Activated naive CD4-positive, alpha-beta T cell treated with anti-CD3 and anti-CD28 coated beads for 36 hours (primary cell): ENCODE measurements at regions of chr13 and their contacts with region 1.

Region 1: GRCh38 chr13:79480954-79481684 is at the start of gene NDFIP2:
- DNase-seq: peak; percentile 86
- H3K4me3 Mint-ChIP-seq: peak within 1 kb of the TSS; percentile 86
- H3K27ac Mint-ChIP-seq: peak within 1 kb of the TSS; percentile 97
- H3K4me1 Mint-ChIP-seq: peaks cover 49% of the 10 kb centered on the region
- H3K27me3 Mint-ChIP-seq: no peaks in the 10 kb centered on the region
- total RNA-seq, gene NDFIP2: 89.5 to 90.8 TPM

Region 2: GRCh38 chr13:78658635-78659449 is 822.3 kb before region 1 on chr13 and contains the start of gene OBI1:
- CTCF ChIA-PET with region 1: no interaction called
- intact Hi-C with region 1: loop called (anchors 10 kb)
- DNase-seq: peak; percentile 90
- H3K4me3 Mint-ChIP-seq: peak within 1 kb of the TSS; percentile 100
- H3K27ac Mint-ChIP-seq: peak within 1 kb of the TSS; percentile 96
- H3K4me1 Mint-ChIP-seq: peaks cover 35% of the 10 kb centered on the region
- H3K27me3 Mint-ChIP-seq: no peaks in the 10 kb centered on the region
- total RNA-seq, gene OBI1: 16.0 to 17.7 TPM

Region 3: GRCh38 chr13:79320433-79320832 is 160.7 kb before region 1 on chr13:
- CTCF ChIA-PET with region 1: no interaction called
- intact Hi-C with region 1: loop called (anchors 5 kb)
- DNase-seq: no peak
- H3K4me3 Mint-ChIP-seq: no peak overlapping the region
- H3K27ac Mint-ChIP-seq: no peak overlapping the region
- H3K4me1 Mint-ChIP-seq: peaks cover 15% of the 10 kb centered on the region
- H3K27me3 Mint-ChIP-seq: no peaks in the 10 kb centered on the region

Region 4: DNA sequence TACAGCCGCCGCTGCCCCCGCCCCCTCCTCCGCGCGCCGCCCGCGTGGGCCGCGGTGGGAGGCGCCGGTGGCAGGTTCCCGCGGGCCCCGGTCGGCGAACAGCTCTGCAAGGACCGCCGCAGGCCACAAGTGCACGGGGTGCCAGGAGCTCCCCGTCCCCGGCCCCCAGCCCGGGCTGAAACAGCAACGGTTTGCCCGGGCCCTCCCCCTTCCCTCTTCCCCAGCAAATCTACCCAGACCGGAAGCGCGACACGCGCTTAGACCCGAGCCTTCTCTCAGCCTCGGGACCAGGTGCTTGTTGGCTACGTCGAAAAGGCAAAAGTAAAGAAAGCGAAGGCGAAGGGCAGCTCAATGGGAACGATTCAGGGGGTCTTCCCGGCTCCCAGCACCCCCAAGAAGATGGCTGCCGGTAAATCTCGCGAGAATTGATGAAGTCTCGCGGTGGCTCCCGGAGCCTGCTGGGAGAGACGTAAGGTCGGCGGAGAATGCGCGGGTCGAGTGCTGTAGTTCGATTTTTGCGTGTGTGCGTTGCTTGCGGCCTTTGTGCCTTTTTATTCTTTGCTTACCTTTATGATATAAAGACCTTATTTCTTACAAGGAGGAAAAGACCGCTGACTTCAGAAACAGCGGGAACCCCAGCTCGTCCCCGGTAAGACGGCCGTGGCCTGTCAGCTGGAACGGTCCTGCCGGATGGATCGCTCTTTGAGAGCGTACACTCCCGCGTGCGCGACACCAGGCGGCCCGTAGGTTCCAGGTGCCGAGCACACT is 75.1 kb before region 1 on chr13 and contains the start of gene RBM26:
- CTCF ChIA-PET with region 1: interaction called, 8 read pairs
- intact Hi-C with region 1: loop called (anchors 1 kb)
- DNase-seq: peak; percentile 96
- H3K4me3 Mint-ChIP-seq: peak within 1 kb of the TSS; percentile 91
- H3K27ac Mint-ChIP-seq: peak within 1 kb of the TSS; percentile 97
- H3K4me1 Mint-ChIP-seq: peaks cover 41% of the 10 kb centered on the region
- H3K27me3 Mint-ChIP-seq: no peaks in the 10 kb centered on the region
- total RNA-seq, gene RBM26: 44.4 to 44.7 TPM

Region 5: GRCh38 chr13:79451500-79451962 is 29.6 kb before region 1 on chr13:
- CTCF ChIA-PET with region 1: interaction called, 13 read pairs
- intact Hi-C with region 1: loop called (anchors 1 kb)
- DNase-seq: peak; percentile 97
- H3K4me3 Mint-ChIP-seq: peak overlapping the region; percentile 68
- H3K27ac Mint-ChIP-seq: peak overlapping the region; percentile 93
- H3K4me1 Mint-ChIP-seq: peaks cover 62% of the 10 kb centered on the region
- H3K27me3 Mint-ChIP-seq: no peaks in the 10 kb centered on the region

Region 6: GRCh38 chr13:79491715-79492114 is 10.6 kb after region 1 on chr13:
- CTCF ChIA-PET with region 1: interaction called, 9 read pairs
- intact Hi-C with region 1: loop called (anchors 1 kb)
- DNase-seq: no peak
- H3K4me3 Mint-ChIP-seq: peak overlapping the region; percentile 72
- H3K27ac Mint-ChIP-seq: peak overlapping the region; percentile 92
- H3K4me1 Mint-ChIP-seq: peaks cover 91% of the 10 kb centered on the region
- H3K27me3 Mint-ChIP-seq: no peaks in the 10 kb centered on the region

Region 7: GRCh38 chr13:79541426-79542049 is 60.4 kb after region 1 on chr13:
- CTCF ChIA-PET with region 1: interaction called, 11 read pairs
- intact Hi-C with region 1: loop called (anchors 1 kb)
- DNase-seq: no peak
- H3K4me3 Mint-ChIP-seq: no peak overlapping the region
- H3K27ac Mint-ChIP-seq: no peak overlapping the region
- H3K4me1 Mint-ChIP-seq: peaks cover 5% of the 10 kb centered on the region
- H3K27me3 Mint-ChIP-seq: no peaks in the 10 kb centered on the region

Region 8: DNA sequence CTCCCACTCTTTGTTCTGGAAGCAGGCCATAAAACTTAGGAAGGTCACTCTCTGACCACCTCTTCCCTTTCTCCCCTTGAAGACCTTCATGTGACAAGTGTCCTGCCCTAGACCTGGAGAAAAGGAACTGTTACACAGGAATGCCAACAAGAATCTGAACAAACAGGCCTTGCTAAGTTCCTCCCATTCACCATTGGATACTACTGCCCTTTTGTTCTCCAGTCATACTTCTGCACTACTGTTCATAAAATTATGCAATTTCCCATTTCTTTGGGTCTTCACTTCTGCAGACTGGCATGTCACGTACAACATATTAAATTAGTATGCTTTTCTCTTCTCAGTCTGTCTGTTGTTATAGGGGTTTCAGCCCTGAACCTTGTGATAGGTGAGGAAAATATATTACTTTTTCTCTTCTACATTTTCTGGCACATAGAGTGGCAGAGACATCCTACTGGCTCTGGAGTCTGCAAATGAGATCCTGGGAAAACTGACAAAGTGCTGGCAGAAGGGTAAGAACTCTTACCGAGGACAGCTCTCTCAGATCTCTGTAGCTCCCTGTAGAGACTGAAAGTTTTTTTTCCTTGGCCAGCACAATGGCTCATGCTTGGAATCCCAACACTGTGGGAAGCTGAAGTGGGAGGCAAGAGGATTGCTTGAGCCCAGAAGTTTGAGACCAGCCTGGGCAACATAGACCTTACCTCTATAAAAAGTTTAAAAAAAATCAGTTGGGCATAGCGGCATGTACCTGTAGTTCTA is 947.4 kb after region 1 on chr13:
- CTCF ChIA-PET with region 1: no interaction called
- intact Hi-C with region 1: no loop called
- DNase-seq: no peak
- H3K4me3 Mint-ChIP-seq: no peak overlapping the region
- H3K27ac Mint-ChIP-seq: no peak overlapping the region
- H3K4me1 Mint-ChIP-seq: no peaks in the 10 kb centered on the region
- H3K27me3 Mint-ChIP-seq: no peaks in the 10 kb centered on the region